Mammary epithelial cell (primary cell): ENCODE measurements at regions of chr2 and their contacts with region 1.

Region 1: GRCh38 chr2:101419096-101419663 is 31.9 kb upstream of the CREG2 start:
- DNase-seq: peak; percentile 45
- H3K4me3 ChIP-seq: no peak overlapping the region
- H3K27ac ChIP-seq: no peak overlapping the region
- H3K4me1 ChIP-seq: no peaks in the 10 kb centered on the region
- H3K27me3 ChIP-seq: no peaks in the 10 kb centered on the region
- CTCF ChIP-seq: peak; percentile 77 to 79

Region 2: GRCh38 chr2:101295895-101296294 is 123.3 kb before region 1 on chr2:
- CTCF ChIA-PET with region 1: no interaction called
- dilution Hi-C with region 1: no loop called
- in situ Hi-C with region 1: no loop called
- intact Hi-C with region 1: no loop called
- DNase-seq: no peak
- H3K4me3 ChIP-seq: no peak overlapping the region
- H3K27ac ChIP-seq: no peak overlapping the region
- H3K4me1 ChIP-seq: no peaks in the 10 kb centered on the region
- H3K27me3 ChIP-seq: no peaks in the 10 kb centered on the region
- CTCF ChIP-seq: no peak

Region 3: DNA sequence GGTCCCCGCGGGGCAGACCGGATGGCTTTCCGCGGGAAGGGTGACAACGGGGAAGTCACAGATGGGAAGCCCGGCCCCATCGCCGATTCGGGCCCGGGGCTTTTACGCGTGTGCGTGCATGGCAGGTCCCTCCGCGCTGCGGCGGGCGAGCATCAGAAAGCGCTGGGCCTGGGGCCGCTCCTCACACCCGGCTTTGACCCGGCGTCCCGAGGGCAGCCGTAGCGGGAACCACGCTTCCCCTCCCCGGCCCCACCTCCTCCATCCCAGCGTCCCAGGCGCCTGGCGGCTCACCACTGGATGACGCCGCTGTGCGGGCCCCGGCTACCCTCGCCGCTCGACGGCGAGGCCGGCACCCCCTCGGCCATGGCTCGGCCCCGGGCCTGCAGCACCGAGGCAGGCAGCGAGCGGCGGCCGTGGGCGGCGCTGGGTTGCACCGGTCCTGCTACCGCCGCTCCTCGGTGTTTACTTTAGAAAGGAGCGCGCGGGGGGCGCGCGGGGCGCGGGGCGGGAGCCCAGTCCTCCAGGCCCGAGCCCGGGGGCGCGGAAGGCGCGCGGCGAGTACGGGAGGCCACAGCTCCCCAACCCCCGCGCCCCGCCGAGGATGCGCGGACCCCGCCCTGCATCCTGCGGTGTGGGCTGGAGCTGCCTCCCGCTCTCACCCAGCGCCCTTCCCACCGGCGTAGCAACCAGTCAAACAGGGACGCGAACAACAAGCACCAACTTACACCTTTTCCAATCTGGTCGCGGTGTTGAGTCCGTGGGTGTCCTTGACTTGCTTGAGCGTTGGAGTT is 54.9 kb after region 1 on chr2:
- CTCF ChIA-PET with region 1: no interaction called
- dilution Hi-C with region 1: loop called (anchors 5 kb)
- in situ Hi-C with region 1: no loop called
- intact Hi-C with region 1: no loop called
- DNase-seq: peak; percentile 24
- H3K4me3 ChIP-seq: peak overlapping the region; percentile 56 to 59 (median 57)
- H3K27ac ChIP-seq: peak overlapping the region; percentile 37
- H3K4me1 ChIP-seq: peaks cover 14% of the 10 kb centered on the region
- H3K27me3 ChIP-seq: no peaks in the 10 kb centered on the region
- CTCF ChIP-seq: no peak

Region 4: GRCh38 chr2:101697124-101698013 is 278.2 kb after region 1 on chr2 and contains the start of gene MAP4K4:
- CTCF ChIA-PET with region 1: no interaction called
- dilution Hi-C with region 1: no loop called
- in situ Hi-C with region 1: no loop called
- intact Hi-C with region 1: loop called (anchors 1 kb)
- DNase-seq: peak; percentile 83
- H3K4me3 ChIP-seq: peak within 1 kb of the TSS; percentile 60 to 85 (median 67)
- H3K27ac ChIP-seq: peak within 1 kb of the TSS; percentile 76
- H3K4me1 ChIP-seq: peaks cover 15% of the 10 kb centered on the region
- H3K27me3 ChIP-seq: no peaks in the 10 kb centered on the region
- CTCF ChIP-seq: peak in 1 of 2 donors; percentile 34
- total RNA-seq, gene MAP4K4: 65.2 to 212 TPM

Region 5: DNA sequence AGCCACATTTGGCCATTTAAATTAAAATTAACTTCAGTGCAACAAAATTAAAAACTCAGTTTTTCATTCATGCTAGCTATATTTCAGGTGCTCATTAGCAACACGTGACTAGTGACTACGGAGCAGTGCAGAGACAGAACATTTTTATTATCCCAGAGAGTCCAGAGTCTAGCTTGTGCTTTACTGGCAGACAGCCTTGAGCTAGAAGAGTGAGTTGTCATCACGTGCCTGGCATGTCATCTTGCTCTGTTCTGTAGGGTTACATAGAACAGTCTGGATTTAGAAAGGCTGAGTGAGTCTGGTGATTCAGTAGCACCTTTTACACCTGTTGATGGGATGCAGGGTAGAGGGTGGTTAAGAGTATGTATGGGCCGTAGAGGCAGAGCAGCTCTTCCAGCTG is 435.7 kb after region 1 on chr2:
- CTCF ChIA-PET with region 1: no interaction called
- dilution Hi-C with region 1: no loop called
- in situ Hi-C with region 1: no loop called
- intact Hi-C with region 1: loop called (anchors 5 kb)
- DNase-seq: no peak
- H3K4me3 ChIP-seq: no peak overlapping the region
- H3K27ac ChIP-seq: no peak overlapping the region
- H3K4me1 ChIP-seq: peaks cover 26% of the 10 kb centered on the region
- H3K27me3 ChIP-seq: no peaks in the 10 kb centered on the region
- CTCF ChIP-seq: no peak

Region 6: DNA sequence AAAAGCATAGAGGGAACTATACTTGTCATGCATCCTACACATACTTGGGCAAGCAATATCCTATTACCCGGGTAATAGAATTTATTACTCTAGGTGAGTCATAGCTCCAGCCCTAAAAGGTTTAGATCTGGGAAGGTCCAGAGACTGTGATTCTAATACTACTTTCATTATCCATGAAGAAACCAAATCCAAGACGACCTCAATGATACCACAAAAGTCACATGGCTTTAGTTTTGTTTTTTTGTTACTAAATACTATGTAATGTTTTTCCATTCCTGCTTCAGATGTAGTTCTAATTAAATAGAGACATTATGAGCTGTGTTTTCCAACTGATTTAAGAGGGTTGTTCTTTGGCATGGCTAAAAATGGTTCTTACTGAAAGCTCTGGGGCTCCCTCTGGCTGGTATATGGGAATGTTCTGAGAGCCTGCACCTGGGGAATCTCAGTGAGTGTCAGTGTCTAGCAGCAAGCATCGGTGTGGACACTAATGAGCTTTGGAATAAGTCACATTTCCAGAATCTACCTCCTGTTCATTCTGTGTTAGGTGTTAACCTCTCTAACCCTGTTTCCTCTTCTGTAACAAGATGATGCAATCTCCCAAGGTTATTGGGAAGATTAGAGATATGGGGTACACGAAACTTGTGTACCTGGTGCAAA is 747.1 kb after region 1 on chr2:
- CTCF ChIA-PET with region 1: no interaction called
- dilution Hi-C with region 1: no loop called
- in situ Hi-C with region 1: no loop called
- intact Hi-C with region 1: loop called (anchors 5 kb)
- DNase-seq: peak; percentile 66
- H3K4me3 ChIP-seq: no peak overlapping the region
- H3K27ac ChIP-seq: peak overlapping the region; percentile 17
- H3K4me1 ChIP-seq: peaks cover 4% of the 10 kb centered on the region
- H3K27me3 ChIP-seq: no peaks in the 10 kb centered on the region
- CTCF ChIP-seq: peak; percentile 60 to 76